MCF 10A (cell line): ENCODE measurements at regions of chr14 and their contacts with region 1.

Region 1: GRCh38 chr14:55579724-55580469 is at the start of gene KTN1:
- DNase-seq: peak; percentile 85
- H3K4me3 Mint-ChIP-seq: peak within 1 kb of the TSS; percentile 70
- H3K27ac Mint-ChIP-seq: peak within 1 kb of the TSS; percentile 70
- H3K4me1 Mint-ChIP-seq: peaks cover 11% of the 10 kb centered on the region
- H3K27me3 Mint-ChIP-seq: no peaks in the 10 kb centered on the region
- CTCF ChIP-seq: no peak
- total RNA-seq, gene KTN1: 165 and 180 TPM in 2 replicates

Region 2: DNA sequence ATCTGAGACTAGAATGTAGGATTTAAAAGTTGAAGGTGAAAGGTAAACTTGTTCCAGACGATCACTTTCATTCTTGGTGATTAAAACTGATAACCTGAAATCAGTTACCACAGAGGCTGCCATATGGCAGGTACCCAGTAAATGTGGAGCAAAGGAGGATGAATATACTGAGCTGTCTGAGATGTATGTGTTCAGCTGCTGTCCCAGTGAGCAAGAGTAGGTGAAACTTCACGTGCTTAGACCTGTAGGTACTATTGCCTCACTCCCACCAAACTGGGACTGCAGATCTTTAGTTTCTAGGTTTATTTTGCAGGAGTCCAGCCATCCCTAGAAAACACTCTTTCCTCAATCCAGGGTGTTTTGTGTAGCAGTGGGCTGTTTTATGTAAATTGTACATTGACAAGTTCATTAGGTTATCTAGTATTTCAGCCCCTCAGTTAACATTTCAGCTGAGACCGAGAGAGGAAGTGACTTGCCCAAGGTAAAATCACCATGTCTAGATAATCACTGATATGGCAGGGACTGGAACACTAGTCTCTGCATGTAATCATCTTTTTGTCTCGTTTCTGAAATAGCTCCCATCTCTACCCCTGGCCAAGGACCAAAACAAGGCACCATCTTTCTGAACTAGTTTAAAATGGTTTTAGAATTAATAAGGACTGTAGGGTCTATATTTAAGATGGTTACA is 231.0 kb before region 1 on chr14:
- CTCF ChIA-PET with region 1: no interaction called
- POLR2A ChIA-PET with region 1: no interaction called
- intact Hi-C with region 1: no loop called
- DNase-seq: no peak
- H3K4me3 Mint-ChIP-seq: no peak overlapping the region
- H3K27ac Mint-ChIP-seq: no peak overlapping the region
- H3K4me1 Mint-ChIP-seq: no peaks in the 10 kb centered on the region
- H3K27me3 Mint-ChIP-seq: no peaks in the 10 kb centered on the region
- CTCF ChIP-seq: no peak

Region 3: GRCh38 chr14:55535516-55536248 is 44.2 kb before region 1 on chr14:
- CTCF ChIA-PET with region 1: no interaction called
- POLR2A ChIA-PET with region 1: interaction called, 10 read pairs
- intact Hi-C with region 1: no loop called
- DNase-seq: peak; percentile 42
- H3K4me3 Mint-ChIP-seq: no peak overlapping the region
- H3K27ac Mint-ChIP-seq: no peak overlapping the region
- H3K4me1 Mint-ChIP-seq: peaks cover 5% of the 10 kb centered on the region
- H3K27me3 Mint-ChIP-seq: no peaks in the 10 kb centered on the region
- CTCF ChIP-seq: no peak

Region 4: GRCh38 chr14:55556929-55557623 is 22.8 kb before region 1 on chr14:
- CTCF ChIA-PET with region 1: interaction called, 4 read pairs
- POLR2A ChIA-PET with region 1: interaction called, 11 read pairs
- intact Hi-C with region 1: no loop called
- DNase-seq: peak; percentile 97
- H3K4me3 Mint-ChIP-seq: peak overlapping the region; percentile 34
- H3K27ac Mint-ChIP-seq: no peak overlapping the region
- H3K4me1 Mint-ChIP-seq: peaks cover 29% of the 10 kb centered on the region
- H3K27me3 Mint-ChIP-seq: no peaks in the 10 kb centered on the region
- CTCF ChIP-seq: no peak

Region 5: DNA sequence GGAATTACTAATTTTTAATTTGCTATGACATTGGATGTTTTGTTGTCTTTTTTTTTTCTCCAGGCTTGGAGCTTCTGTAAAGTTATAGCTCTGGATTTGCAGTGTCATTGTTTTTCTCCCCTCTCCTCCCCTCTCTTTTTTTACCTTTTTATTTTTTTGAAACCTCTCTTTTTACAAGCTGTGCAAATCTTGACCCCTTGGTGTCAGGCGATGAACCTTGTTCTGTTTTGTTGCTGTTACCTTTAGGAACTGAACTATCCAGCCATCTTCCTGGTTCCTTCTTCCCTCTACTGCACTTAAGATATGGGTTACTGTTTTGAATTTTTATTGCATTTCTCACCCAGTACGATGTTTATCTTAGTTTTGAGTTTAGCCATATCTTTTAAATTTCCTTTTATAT is 13.8 kb after region 1 on chr14:
- CTCF ChIA-PET with region 1: interaction called, 10 read pairs
- POLR2A ChIA-PET with region 1: interaction called, 88 read pairs
- intact Hi-C with region 1: no loop called
- DNase-seq: no peak
- H3K4me3 Mint-ChIP-seq: no peak overlapping the region
- H3K27ac Mint-ChIP-seq: peak overlapping the region; percentile 2
- H3K4me1 Mint-ChIP-seq: peaks cover 33% of the 10 kb centered on the region
- H3K27me3 Mint-ChIP-seq: no peaks in the 10 kb centered on the region
- CTCF ChIP-seq: no peak

Region 6: GRCh38 chr14:55599200-55599879 is 19.4 kb after region 1 on chr14:
- CTCF ChIA-PET with region 1: interaction called, 5 read pairs
- POLR2A ChIA-PET with region 1: interaction called, 88 read pairs
- intact Hi-C with region 1: no loop called
- DNase-seq: peak; percentile 90
- H3K4me3 Mint-ChIP-seq: peak overlapping the region; percentile 68
- H3K27ac Mint-ChIP-seq: peak overlapping the region; percentile 93
- H3K4me1 Mint-ChIP-seq: peaks cover 17% of the 10 kb centered on the region
- H3K27me3 Mint-ChIP-seq: no peaks in the 10 kb centered on the region
- CTCF ChIP-seq: no peak

Region 7: DNA sequence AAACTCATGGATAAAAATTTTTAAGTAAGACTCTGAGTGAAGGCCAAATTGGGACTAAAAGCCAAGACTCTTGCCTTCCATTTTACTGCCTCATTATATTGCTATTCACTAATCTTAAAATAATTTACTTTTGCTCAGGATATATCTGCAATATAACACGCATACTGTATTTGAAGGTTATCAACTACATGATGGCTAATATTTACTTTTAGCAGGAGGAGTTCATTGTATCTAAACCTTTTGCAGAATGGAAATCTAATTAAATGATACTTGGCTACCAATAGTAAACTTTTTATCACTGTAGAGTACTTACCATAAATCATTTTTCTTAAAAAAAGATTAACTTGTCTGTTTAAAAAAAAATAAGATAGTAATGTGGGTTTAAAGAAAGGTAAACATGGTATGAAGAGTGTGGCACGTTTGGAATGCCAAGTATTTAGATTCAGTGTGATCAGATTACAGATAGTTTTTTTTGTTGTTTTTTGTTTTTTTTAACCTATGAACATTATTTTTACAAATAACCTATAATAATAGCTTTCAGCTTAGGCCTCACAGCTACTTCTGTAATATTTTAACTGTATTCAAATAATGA is 25.8 kb after region 1 on chr14:
- CTCF ChIA-PET with region 1: interaction called, 4 read pairs
- POLR2A ChIA-PET with region 1: interaction called, 88 read pairs
- intact Hi-C with region 1: no loop called
- DNase-seq: no peak
- H3K4me3 Mint-ChIP-seq: no peak overlapping the region
- H3K27ac Mint-ChIP-seq: peak overlapping the region; percentile 50
- H3K4me1 Mint-ChIP-seq: peaks cover 27% of the 10 kb centered on the region
- H3K27me3 Mint-ChIP-seq: no peaks in the 10 kb centered on the region
- CTCF ChIP-seq: no peak

Region 8: GRCh38 chr14:55645145-55645544 is 65.2 kb after region 1 on chr14:
- CTCF ChIA-PET with region 1: no interaction called
- POLR2A ChIA-PET with region 1: no interaction called
- intact Hi-C with region 1: no loop called
- DNase-seq: no peak
- H3K4me3 Mint-ChIP-seq: no peak overlapping the region
- H3K27ac Mint-ChIP-seq: no peak overlapping the region
- H3K4me1 Mint-ChIP-seq: peaks cover 6% of the 10 kb centered on the region
- H3K27me3 Mint-ChIP-seq: no peaks in the 10 kb centered on the region
- CTCF ChIP-seq: no peak

Region 9: DNA sequence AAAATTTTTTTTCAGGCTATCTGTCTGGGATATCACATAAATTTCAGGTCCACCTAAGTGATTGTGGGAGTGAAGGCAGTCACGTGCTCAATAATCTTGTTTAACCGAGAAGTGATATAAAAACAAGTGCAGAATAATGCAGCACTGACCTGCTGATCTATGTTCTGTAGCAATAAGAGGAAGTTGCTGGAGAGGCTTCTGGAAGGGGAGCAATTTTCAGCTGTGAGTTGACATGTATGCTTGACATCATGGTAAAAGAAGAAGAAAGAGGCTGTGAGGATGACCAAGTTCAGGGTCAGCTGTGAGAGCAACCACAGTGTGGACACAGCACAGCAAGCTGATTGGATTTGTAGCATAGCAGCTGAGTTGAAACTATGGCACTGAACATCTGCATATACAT is 366.3 kb after region 1 on chr14:
- CTCF ChIA-PET with region 1: no interaction called
- POLR2A ChIA-PET with region 1: no interaction called
- intact Hi-C with region 1: no loop called
- DNase-seq: no peak
- H3K4me3 Mint-ChIP-seq: no peak overlapping the region
- H3K27ac Mint-ChIP-seq: no peak overlapping the region
- H3K4me1 Mint-ChIP-seq: peaks cover 7% of the 10 kb centered on the region
- H3K27me3 Mint-ChIP-seq: no peaks in the 10 kb centered on the region
- CTCF ChIP-seq: no peak